ENCODE measurements at regions of chr15 and their contacts with region 1.

Region 1: DNA sequence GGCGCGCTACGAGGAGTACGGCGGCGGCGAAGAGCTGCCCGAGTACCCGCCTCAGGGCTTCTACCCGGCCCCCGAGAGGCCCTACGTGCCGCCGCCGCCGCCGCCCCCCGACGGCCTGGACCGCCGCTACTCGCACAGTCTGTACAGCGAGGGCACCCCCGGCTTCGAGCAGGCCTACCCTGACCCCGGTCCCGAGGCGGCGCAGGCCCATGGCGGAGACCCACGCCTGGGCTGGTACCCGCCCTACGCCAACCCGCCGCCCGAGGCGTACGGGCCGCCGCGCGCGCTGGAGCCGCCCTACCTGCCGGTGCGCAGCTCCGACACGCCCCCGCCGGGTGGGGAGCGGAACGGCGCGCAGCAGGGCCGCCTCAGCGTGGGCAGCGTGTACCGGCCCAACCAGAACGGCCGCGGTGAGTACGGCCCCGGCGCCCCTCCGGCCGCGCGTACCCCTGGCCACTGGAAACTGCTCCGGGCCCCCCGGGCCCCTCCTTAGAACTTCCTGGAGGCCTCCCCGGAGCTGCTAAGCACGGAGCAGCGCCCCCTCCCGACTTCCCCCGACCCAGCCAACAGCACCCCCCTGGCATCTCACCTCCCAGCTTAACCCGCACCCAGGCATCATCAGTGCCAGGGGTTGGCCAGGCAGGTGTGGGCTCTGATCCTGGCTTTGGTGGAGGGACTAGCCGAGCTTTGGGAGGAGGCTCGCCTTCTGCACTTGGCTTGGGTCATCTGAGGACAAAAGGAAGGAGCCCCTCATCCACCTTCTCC is 1.4 kb downstream of the LOXL1 start:
- DNase-seq: peak; percentile 78 to 91
- ATAC-seq: peak; percentile 38
- H3K4me3 ChIP-seq: peak overlapping the region; percentile 30 to 73
- H3K27ac ChIP-seq: peak overlapping the region; percentile 80 to 97
- H3K4me1 ChIP-seq: peaks cover 0 to 4% of the 10 kb centered on the region in 2 donors
- H3K27me3 ChIP-seq: no peaks in the 10 kb centered on the region

Region 2: DNA sequence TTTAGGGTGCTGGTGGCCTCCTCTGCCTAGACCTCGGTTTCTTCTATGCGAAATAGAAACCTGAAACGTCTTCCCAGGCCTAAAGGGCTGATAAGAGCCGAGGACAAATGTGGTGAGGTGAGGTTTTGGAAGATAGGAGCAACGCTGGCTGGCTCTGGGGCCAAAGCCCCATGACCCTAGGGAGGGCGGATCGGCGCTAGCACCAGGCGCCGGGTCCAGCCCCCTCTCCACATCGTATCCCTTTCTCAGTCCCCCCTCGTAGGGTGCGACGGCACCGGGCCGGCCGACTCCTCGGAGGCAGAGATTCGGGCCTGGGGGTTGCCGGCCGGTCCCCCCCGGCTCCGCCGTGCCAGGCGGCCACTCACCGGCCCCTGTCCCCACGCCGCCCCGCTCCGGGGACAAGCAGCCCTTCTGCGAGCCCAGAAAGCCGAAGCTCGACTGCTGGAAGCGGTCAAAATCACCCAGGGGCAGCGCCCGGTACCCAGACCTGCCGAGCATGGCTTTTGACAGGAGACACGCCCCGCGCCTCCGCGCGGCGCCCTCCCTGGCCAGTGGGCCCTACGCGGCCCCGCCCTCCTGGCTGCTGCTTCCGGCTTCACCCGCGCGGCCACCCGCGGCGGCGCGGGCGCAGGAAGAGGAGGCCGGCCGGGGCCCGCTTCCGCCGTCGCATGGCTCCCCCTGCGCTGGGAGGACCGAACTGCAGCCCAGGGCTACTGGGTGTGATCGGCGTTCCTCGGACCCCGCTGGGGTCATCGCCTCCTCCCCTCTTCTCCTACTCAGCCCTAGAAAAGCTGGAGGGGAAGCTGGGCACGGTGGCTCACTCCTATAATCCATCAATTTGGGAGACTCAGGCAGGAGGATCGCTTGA is 64.3 kb after region 1 on chr15 and contains the start of gene STOML1:
- intact Hi-C with region 1: loop called in 1 of 2 experiments (anchors 5 kb)
- DNase-seq: peak; percentile 96 to 99
- ATAC-seq: peak; percentile 92
- H3K4me3 ChIP-seq: peak within 1 kb of the TSS; percentile 57 to 85
- H3K27ac ChIP-seq: peak within 1 kb of the TSS; percentile 30 to 86
- H3K4me1 ChIP-seq: no peaks in the 10 kb centered on the region
- H3K27me3 ChIP-seq: no peaks in the 10 kb centered on the region
- total RNA-seq, gene STOML1: 12.9 to 16.4 TPM

Measured in aorta (tissue), 5 donors.